ENCODE measurements at regions of chr2 and their contacts with region 1.

Region 1: DNA sequence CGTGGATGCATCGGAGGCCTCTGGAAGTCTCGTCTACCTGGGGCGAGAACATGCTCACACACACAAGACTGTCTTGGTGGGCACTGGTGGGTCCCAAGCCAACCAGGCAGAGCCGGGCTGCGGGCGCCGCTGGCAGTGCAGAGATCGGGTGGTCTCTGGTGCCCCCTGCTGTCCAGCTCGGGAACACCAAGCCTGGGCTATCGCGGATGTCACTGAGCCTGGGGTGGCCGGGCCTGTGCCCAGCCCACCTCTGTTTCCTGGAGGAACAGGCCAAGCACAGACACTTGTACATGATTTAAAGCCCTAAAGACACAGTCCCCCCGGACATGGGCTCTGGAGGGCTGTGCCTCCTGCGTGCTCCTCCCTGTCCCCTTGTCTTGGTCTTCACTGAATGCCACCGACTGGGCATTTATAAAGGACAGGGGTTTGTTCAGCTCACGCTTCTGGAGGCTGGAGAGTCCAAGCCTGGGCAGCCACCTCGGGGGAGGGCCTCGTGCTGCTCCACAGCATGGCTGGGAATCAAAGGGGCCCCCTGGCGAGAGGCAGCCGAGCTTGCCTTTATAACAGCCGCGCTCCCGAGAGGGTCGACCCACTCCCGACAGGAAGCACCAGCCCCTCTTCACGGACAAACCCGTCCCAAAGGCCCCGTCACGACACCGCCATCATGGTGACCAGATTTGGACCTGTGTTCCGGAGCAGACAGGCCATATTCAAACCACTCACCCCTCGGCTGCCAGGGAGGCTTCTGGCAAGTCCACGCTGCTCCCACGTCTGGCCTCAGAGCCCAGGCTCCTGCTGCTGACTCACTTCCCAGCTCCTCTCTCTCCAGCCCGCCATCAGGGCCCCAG is 3.6 kb upstream of the OTOS start:
- DNase-seq: peak; percentile 89
- ATAC-seq: peak; percentile 67

Region 2: GRCh38 chr2:240060977-240061591 is 82.9 kb before region 1 on chr2:
- intact Hi-C with region 1: loop called (anchors 2 kb)
- DNase-seq: no peak
- ATAC-seq: no peak